Mammary epithelial cell (primary cell): ENCODE measurements at regions of chr6 and their contacts with region 1.

Region 1: DNA sequence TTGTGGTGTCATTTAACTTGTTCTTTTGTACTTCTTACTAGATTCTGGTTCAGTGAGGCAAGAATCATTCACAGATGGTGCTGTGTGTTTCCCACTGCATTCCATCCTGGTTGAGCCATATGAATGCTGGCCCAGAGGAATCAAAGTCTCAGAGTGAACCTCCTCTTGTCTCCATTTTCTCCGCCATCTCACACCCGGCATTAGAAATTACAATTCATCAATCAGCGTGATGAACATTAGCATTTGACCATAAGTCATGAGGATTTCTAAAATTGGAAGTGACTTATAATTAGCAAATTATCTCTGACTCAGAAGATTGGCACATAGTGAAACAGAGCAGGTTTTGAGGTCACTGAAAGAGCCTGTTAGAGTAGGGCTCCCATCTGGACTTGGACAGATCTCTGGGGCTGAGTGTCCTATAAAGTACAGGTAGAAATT is 25.2 kb downstream of the TNFAIP3 start:
- DNase-seq: peak; percentile 72
- H3K4me3 ChIP-seq: no peak overlapping the region
- H3K27ac ChIP-seq: peak overlapping the region; percentile 56
- H3K4me1 ChIP-seq: peaks cover 34% of the 10 kb centered on the region
- H3K27me3 ChIP-seq: no peaks in the 10 kb centered on the region
- CTCF ChIP-seq: no peak

Region 2: GRCh38 chr6:137550535-137550934 is 341.8 kb before region 1 on chr6:
- CTCF ChIA-PET with region 1: no interaction called
- dilution Hi-C with region 1: no loop called
- in situ Hi-C with region 1: no loop called
- intact Hi-C with region 1: no loop called
- DNase-seq: no peak
- H3K4me3 ChIP-seq: no peak overlapping the region
- H3K27ac ChIP-seq: no peak overlapping the region
- H3K4me1 ChIP-seq: no peaks in the 10 kb centered on the region
- H3K27me3 ChIP-seq: no peaks in the 10 kb centered on the region
- CTCF ChIP-seq: no peak

Region 3: DNA sequence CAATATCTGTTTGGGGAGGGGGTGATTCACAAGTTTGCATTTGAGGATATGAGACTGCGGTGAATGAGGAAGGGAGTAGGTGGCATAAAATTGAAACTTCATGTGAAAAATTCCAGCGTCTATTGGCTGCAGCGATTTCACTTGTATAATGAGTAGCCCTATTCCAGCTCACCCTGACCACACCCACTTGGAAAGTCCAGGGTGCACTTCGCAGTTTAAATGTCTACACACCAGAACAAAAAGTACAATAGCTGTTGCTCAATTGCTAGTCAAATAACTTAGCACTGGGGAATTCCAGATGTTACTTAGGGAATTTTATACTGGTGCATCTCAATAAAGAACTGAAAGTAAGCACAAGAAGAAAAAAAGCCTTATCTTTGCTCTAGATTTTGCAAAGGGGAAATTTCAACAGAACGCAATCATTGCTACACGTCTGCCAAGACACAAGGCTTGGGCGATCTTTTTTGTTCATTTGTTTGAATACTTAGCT is 19.0 kb before region 1 on chr6:
- CTCF ChIA-PET with region 1: interaction called, 14 read pairs
- dilution Hi-C with region 1: no loop called
- in situ Hi-C with region 1: no loop called
- intact Hi-C with region 1: loop called (anchors 2 kb)
- DNase-seq: peak; percentile 96
- H3K4me3 ChIP-seq: peak overlapping the region; percentile 12 to 32 (median 18)
- H3K27ac ChIP-seq: peak overlapping the region; percentile 95
- H3K4me1 ChIP-seq: peaks cover 52% of the 10 kb centered on the region
- H3K27me3 ChIP-seq: no peaks in the 10 kb centered on the region
- CTCF ChIP-seq: no peak

Region 4: DNA sequence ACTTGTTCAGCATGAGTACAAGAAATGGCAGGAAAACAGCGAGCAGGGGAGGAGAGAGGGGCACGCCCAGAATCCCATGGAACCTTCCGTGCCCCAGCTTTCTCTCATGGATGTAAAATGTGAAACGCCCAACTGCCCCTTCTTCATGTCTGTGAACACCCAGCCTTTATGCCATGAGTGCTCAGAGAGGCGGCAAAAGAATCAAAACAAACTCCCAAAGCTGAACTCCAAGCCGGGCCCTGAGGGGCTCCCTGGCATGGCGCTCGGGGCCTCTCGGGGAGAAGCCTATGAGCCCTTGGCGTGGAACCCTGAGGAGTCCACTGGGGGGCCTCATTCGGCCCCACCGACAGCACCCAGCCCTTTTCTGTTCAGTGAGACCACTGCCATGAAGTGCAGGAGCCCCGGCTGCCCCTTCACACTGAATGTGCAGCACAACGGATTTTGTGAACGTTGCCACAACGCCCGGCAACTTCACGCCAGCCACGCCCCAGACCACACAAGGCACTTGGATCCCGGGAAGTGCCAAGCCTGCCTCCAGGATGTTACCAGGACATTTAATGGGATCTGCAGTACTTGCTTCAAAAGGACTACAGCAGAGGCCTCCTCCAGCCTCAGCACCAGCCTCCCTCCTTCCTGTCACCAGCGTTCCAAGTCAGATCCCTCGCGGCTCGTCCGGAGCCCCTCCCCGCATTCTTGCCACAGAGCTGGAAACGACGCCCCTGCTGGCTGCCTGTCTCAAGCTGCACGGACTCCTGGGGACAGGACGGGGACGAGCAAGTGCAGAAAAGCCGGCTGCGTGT is 13.6 kb before region 1 on chr6:
- CTCF ChIA-PET with region 1: interaction called, 14 read pairs
- dilution Hi-C with region 1: no loop called
- in situ Hi-C with region 1: no loop called
- intact Hi-C with region 1: no loop called
- DNase-seq: no peak
- H3K4me3 ChIP-seq: no peak overlapping the region
- H3K27ac ChIP-seq: no peak overlapping the region
- H3K4me1 ChIP-seq: peaks cover 16% of the 10 kb centered on the region
- H3K27me3 ChIP-seq: no peaks in the 10 kb centered on the region
- CTCF ChIP-seq: no peak

Region 5: GRCh38 chr6:137927777-137928218 is 35.5 kb after region 1 on chr6:
- CTCF ChIA-PET with region 1: no interaction called
- dilution Hi-C with region 1: no loop called
- in situ Hi-C with region 1: no loop called
- intact Hi-C with region 1: loop called (anchors 2 kb)
- DNase-seq: peak; percentile 23
- H3K4me3 ChIP-seq: no peak overlapping the region
- H3K27ac ChIP-seq: no peak overlapping the region
- H3K4me1 ChIP-seq: peaks cover 27% of the 10 kb centered on the region
- H3K27me3 ChIP-seq: no peaks in the 10 kb centered on the region
- CTCF ChIP-seq: no peak